Dorsolateral prefrontal cortex (tissue), 120 donors: ENCODE measurements at regions of chr3 and their contacts with region 1.

Region 1: GRCh38 chr3:153768561-153769469 is 352.4 kb upstream of the ARHGEF26 start:
- DNase-seq: peak in 1 of 10 donors; percentile 24
- H3K4me3 ChIP-seq: no peak overlapping the region
- H3K27ac ChIP-seq: no peak overlapping the region
- H3K27me3 ChIP-seq: no peaks in the 10 kb centered on the region
- CTCF ChIP-seq: peak; percentile 44 to 82 (median 69)

Region 2: DNA sequence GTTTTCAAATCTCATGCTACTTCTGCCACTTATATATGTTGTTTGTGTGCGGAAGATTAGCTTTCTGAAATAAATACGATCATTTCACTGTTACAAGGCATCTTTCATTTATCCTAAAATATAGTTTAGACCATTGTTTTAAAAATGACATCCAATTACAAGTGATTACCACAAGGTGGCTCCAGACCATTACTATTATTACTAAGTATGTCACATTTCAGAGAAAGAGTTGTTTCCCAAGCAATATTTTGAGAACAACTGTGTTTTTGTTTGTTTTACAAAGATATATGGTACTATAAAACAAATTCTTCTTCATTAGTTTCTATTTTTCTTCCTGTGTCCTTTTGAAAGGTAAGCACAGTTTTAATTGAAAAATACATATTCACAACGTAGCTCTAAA is 742.8 kb before region 1 on chr3:
- intact Hi-C with region 1: loop called in 1 of 2 experiments (anchors 10 kb)
- DNase-seq: no peak
- H3K4me3 ChIP-seq: no peak overlapping the region
- H3K27ac ChIP-seq: no peak overlapping the region
- H3K27me3 ChIP-seq: no peaks in the 10 kb centered on the region
- CTCF ChIP-seq: peak; percentile 49 to 80 (median 71)

Region 3: DNA sequence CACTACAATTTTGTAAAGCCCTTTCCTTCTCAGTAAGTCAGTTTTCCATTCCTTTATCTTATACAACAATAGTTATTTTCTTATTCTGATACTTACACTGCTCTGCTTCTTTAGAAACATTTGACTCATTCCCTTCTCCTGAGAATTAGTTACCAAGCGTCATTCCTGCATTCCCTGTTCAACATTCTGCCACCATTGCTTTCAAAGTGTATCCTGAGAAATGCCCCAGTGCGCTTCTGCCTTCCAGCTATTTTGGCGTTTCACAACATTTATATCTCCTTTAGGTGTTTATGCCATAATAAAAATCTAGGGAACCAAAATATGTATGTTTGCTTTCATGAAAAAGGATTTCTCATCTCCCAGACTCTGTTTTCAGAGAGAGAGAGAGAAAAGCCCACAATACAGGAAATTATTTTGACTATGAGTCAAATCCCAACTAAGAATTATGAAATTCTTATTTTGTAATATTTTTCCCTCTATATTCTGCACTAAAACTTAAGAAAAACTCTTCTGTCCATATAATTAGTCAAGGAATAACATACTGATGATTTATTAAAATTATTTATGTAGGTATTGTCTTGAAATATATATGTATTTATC is 725.0 kb before region 1 on chr3:
- intact Hi-C with region 1: loop called in 1 of 2 experiments (anchors 1 kb)
- DNase-seq: no peak
- H3K4me3 ChIP-seq: peak overlapping the region in 11 of 59 donors; percentile 36 to 56 (median 46)
- H3K27ac ChIP-seq: no peak overlapping the region
- H3K27me3 ChIP-seq: peaks cover 0 to 5% (median 0%) of the 10 kb centered on the region in 45 donors
- CTCF ChIP-seq: no peak

Region 4: GRCh38 chr3:153052096-153052460 is 716.7 kb before region 1 on chr3:
- intact Hi-C with region 1: loop called in 1 of 2 experiments (anchors 10 kb)
- DNase-seq: peak in 1 of 10 donors; percentile 12
- H3K4me3 ChIP-seq: no peak overlapping the region
- H3K27ac ChIP-seq: no peak overlapping the region
- H3K27me3 ChIP-seq: no peaks in the 10 kb centered on the region
- CTCF ChIP-seq: no peak

Region 5: GRCh38 chr3:153574445-153574844 is 194.4 kb before region 1 on chr3:
- intact Hi-C with region 1: loop called in 1 of 2 experiments (anchors 10 kb)
- DNase-seq: no peak
- H3K4me3 ChIP-seq: no peak overlapping the region
- H3K27ac ChIP-seq: no peak overlapping the region
- H3K27me3 ChIP-seq: no peaks in the 10 kb centered on the region
- CTCF ChIP-seq: no peak

Region 6: GRCh38 chr3:153628591-153628990 is 140.2 kb before region 1 on chr3:
- intact Hi-C with region 1: no loop called
- DNase-seq: no peak
- H3K4me3 ChIP-seq: no peak overlapping the region
- H3K27ac ChIP-seq: no peak overlapping the region
- H3K27me3 ChIP-seq: no peaks in the 10 kb centered on the region
- CTCF ChIP-seq: no peak